Activated naive CD4-positive, alpha-beta T cell treated with anti-CD3 and anti-CD28 coated beads for 36 hours (primary cell): ENCODE measurements at regions of chr2 and their contacts with region 1.

Region 1: GRCh38 chr2:86440631-86441391 is at the start of gene KDM3A:
- DNase-seq: peak; percentile 100
- H3K4me3 Mint-ChIP-seq: peak within 1 kb of the TSS; percentile 92
- H3K27ac Mint-ChIP-seq: peak within 1 kb of the TSS; percentile 100
- H3K4me1 Mint-ChIP-seq: peaks cover 37% of the 10 kb centered on the region
- H3K27me3 Mint-ChIP-seq: no peaks in the 10 kb centered on the region
- total RNA-seq, gene KDM3A: 47.3 to 49.9 TPM

Region 2: DNA sequence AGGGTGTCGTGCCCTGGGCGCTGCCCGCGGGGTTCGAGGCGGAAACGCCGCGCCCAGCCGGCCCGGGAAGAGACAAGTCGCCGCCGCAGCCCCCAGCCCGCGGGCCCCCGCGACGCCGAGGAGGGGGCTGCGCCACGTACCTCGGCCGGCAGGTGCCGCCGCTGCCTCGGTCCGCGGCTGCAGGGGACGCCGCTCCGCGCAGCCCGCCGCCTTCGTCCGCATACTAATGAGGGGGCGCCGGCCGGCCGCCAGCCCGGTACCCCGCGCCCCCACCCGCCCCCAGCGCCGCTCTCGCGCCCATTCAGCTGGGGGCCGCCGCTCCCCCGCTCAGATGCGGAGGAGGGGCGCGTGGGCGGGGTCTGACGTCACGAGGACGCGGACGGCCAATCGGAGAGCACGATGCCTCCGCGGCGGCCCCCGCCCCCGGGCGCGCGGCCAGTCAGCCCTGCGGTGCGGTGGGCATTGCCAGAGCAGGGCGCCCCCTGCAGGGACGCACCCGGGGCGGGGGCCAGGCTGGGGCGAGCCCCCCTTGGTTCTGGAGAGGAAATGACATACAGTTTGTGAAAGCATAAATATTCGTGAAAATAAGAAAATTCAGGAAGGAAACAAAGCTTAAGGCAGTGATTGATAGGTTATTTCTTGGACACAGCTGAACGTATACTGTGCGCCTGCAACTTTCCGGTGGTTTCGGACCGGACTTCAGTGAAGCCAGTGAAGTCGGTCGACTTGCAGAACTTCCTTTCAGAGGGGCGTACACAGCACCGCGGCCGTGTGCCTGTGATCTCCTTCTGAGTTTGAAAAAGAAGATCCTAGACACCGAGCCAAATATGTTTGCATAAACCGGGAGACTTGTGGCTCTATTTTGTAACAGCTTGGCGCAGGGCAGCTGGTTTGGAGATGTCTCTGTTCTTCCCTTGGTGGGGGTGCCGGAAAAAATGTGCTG is 551.9 kb before region 1 on chr2 and contains the start of gene ST3GAL5:
- CTCF ChIA-PET with region 1: no interaction called
- intact Hi-C with region 1: loop called (anchors 5 kb)
- DNase-seq: peak; percentile 89
- H3K4me3 Mint-ChIP-seq: peak within 1 kb of the TSS; percentile 88
- H3K27ac Mint-ChIP-seq: peak within 1 kb of the TSS; percentile 87
- H3K4me1 Mint-ChIP-seq: peaks cover 60% of the 10 kb centered on the region
- H3K27me3 Mint-ChIP-seq: no peaks in the 10 kb centered on the region
- total RNA-seq, gene ST3GAL5: 9.5 to 10.4 TPM

Region 3: GRCh38 chr2:86195055-86195807 is 245.6 kb before region 1 on chr2 and contains the start of gene IMMT:
- CTCF ChIA-PET with region 1: no interaction called
- intact Hi-C with region 1: loop called (anchors 1 kb)
- DNase-seq: peak; percentile 96
- H3K4me3 Mint-ChIP-seq: peak within 1 kb of the TSS; percentile 89
- H3K27ac Mint-ChIP-seq: peak within 1 kb of the TSS; percentile 90
- H3K4me1 Mint-ChIP-seq: peaks cover 47% of the 10 kb centered on the region
- H3K27me3 Mint-ChIP-seq: no peaks in the 10 kb centered on the region
- total RNA-seq, gene IMMT: 164 to 168 TPM

Region 4: DNA sequence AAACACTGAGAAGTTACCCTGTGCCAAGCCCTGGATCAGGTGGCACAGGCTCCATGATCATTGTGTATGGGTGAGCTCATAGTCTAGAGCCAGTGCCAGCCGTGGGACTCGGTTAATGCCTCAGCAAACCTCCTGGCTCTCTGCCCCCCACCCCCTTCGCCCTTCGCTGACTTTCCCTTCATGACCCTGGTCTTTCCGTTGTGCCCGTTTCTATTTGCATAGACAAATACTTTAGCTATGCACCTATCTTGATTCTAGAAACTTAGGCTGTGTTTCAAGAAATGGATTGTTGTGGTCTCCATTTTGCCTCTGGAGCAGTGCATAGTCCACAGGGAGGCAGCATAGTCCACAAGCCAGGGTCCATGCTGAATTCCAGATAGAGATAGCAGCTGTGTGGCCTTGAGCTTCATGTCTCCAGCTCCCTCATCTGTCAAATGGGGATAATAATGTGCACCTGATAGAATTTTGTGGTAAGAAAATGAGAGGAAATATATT is 44.5 kb before region 1 on chr2:
- CTCF ChIA-PET with region 1: interaction called, 3 read pairs
- intact Hi-C with region 1: loop called (anchors 1 kb)
- DNase-seq: peak; percentile 57
- H3K4me3 Mint-ChIP-seq: no peak overlapping the region
- H3K27ac Mint-ChIP-seq: peak overlapping the region; percentile 15
- H3K4me1 Mint-ChIP-seq: peaks cover 17% of the 10 kb centered on the region
- H3K27me3 Mint-ChIP-seq: no peaks in the 10 kb centered on the region

Region 5: GRCh38 chr2:86562922-86563649 is 122.3 kb after region 1 on chr2 and contains the start of gene CHMP3:
- CTCF ChIA-PET with region 1: no interaction called
- intact Hi-C with region 1: loop called (anchors 1 kb)
- DNase-seq: peak; percentile 97
- H3K4me3 Mint-ChIP-seq: peak within 1 kb of the TSS; percentile 92
- H3K27ac Mint-ChIP-seq: peak within 1 kb of the TSS; percentile 99
- H3K4me1 Mint-ChIP-seq: peaks cover 25% of the 10 kb centered on the region
- H3K27me3 Mint-ChIP-seq: no peaks in the 10 kb centered on the region
- total RNA-seq, gene CHMP3: 27.0 to 29.6 TPM

Region 6: DNA sequence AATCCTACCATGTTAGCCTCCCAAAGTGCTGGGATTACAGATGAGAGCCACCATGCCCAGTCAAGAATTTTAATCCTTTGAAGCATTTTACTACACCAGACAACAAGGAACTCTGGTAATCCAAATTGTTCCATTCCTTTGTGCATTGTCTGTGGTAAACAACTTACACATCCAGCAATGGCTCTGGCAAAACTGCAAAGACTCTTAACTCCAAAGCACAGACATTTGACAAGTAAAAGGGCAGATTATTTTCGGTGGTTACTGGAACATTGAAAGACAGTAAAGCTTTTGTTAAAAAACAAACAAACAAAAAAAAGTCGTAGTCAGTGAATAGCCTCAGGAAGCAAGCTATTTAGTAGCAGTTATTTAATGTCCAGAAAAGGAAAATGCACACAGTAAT is 246.1 kb after region 1 on chr2:
- CTCF ChIA-PET with region 1: no interaction called
- intact Hi-C with region 1: no loop called
- DNase-seq: no peak
- H3K4me3 Mint-ChIP-seq: no peak overlapping the region
- H3K27ac Mint-ChIP-seq: no peak overlapping the region
- H3K4me1 Mint-ChIP-seq: no peaks in the 10 kb centered on the region
- H3K27me3 Mint-ChIP-seq: no peaks in the 10 kb centered on the region